ENCODE measurements at regions of chr5 and their contacts with region 1.

Region 1: DNA sequence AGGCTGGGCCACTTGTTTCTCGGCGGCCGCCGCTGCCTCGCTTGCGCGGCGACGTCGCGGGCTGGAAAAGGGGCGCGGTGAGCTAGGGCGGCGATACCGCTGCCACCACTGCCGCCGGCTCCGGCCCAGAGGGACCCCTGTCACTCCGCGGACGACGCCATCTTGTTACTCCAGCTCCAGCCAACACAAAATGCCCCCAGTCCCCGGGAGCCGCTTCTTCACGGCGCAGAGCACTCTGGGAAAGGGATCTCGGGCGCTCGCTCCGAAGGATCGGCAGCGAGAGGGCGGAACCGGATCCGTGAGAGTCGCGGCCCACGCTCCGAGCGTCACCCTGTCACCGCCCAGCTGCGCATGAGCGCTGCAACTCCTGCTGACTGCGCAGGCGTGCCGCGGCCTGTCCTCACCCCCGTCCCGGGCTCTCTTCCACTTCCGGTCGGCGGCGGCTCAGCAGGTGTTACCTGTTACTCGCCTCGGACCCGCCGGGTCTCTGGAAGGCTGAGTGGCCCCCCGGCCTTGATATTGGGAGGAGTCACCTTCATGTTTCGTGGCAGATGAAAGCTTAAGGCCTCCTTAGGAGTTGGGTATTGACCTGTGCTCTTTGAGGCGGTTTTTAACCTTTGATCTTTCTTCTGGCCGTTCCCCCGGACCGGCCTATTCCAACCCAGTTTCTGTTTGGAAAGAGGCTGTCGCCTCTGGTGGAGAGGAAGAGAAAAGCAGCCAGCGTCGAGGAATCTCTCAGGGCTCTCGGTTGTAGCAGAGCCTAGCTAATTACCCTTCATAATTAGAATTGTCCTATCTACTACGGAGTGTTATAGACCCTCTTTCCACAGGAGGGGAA is at the start of gene CSNK1A1:
- DNase-seq: peak; percentile 99
- H3K4me3 ChIP-seq: peak within 1 kb of the TSS; percentile 76
- H3K4me3 Mint-ChIP-seq: peak within 1 kb of the TSS; percentile 99
- H3K27ac Mint-ChIP-seq: peak within 1 kb of the TSS; percentile 99
- H3K4me1 ChIP-seq: peaks cover 30% of the 10 kb centered on the region
- H3K4me1 Mint-ChIP-seq: peaks cover 16% of the 10 kb centered on the region
- H3K27me3 ChIP-seq: no peaks in the 10 kb centered on the region
- H3K27me3 Mint-ChIP-seq: no peaks in the 10 kb centered on the region
- CTCF ChIP-seq: peak; percentile 80
- total RNA-seq, gene CSNK1A1: 252 and 264 TPM in 2 replicates

Region 2: DNA sequence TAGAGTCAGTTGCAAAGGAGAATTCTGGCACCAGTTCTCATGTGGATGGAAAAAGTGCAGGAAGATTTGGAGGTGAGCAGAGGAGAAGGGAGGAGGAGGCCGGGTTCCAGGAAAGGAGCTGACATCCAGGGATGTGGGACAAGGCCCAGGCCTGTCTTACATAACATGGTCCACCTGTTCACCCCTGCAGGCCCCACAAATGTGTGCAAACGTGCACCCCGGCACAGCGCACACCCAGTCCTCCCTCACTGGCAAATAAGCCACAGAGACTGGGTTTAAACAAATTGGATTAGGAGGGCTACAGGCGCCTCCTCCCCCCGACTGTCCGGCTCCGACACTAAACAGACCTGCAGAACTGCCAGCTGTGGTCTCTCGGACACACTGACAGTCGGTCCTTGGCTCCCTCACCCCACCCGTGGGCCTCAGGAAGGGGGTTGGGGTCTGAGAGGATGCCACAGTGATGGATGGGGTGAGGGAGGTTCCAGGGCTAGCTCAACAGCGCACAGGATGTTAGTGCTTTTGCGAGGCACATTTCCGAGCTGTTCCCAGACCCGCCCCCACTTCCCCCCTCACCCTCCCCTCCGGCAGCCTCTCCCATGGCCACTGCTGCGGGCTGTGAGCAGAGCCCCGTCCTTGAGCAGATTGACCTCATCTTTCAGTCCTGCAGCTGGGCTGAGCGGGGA is 128.9 kb before region 1 on chr5:
- CTCF ChIA-PET with region 1: no interaction called
- POLR2A ChIA-PET with region 1: no interaction called
- intact Hi-C with region 1: no loop called
- DNase-seq: no peak
- H3K4me3 ChIP-seq: no peak overlapping the region
- H3K4me3 Mint-ChIP-seq: no peak overlapping the region
- H3K27ac Mint-ChIP-seq: no peak overlapping the region
- H3K4me1 ChIP-seq: no peaks in the 10 kb centered on the region
- H3K4me1 Mint-ChIP-seq: no peaks in the 10 kb centered on the region
- H3K27me3 ChIP-seq: no peaks in the 10 kb centered on the region
- H3K27me3 Mint-ChIP-seq: no peaks in the 10 kb centered on the region
- CTCF ChIP-seq: no peak

Region 3: DNA sequence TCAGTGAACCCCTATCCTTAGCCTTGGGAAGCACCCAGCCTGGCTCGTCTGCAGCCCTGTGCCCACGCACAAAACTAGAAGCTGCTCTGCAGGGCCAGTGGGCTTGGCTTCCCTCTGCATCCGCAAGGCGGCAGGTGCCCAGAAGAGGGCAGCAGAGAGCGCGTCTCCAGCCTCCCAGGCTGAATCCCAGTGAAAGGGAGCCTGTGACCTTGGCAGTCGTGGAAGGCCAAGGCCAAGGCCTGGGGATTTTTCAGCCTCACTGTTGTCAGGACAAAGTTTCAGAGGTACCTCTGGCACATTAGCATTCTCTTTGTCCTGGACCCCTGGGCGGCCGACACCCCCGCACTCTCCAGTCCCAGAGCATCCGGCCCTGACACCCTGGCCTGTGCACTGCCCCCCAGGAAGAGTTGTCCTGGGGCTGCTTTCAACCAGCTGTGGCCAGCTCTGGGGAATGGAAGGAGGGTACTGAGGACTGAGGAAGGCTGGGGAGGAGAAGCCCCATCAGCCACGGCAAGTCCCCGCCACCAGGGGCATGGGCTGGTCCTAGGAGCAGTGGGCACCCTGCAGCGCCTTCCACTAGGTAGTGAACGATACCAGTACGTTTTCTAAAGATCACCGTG is 108.7 kb before region 1 on chr5:
- CTCF ChIA-PET with region 1: interaction called, 3 read pairs
- POLR2A ChIA-PET with region 1: interaction called, 5 read pairs
- intact Hi-C with region 1: loop called (anchors 1 kb)
- DNase-seq: peak; percentile 81 to 92
- H3K4me3 ChIP-seq: no peak overlapping the region
- H3K4me3 Mint-ChIP-seq: no peak overlapping the region
- H3K27ac Mint-ChIP-seq: peak overlapping the region; percentile 47
- H3K4me1 ChIP-seq: peaks cover 23% of the 10 kb centered on the region
- H3K4me1 Mint-ChIP-seq: peaks cover 30% of the 10 kb centered on the region
- H3K27me3 ChIP-seq: no peaks in the 10 kb centered on the region
- H3K27me3 Mint-ChIP-seq: no peaks in the 10 kb centered on the region
- CTCF ChIP-seq: peak; percentile 85 to 95

Region 4: GRCh38 chr5:149485655-149486425 is 65.6 kb before region 1 on chr5:
- CTCF ChIA-PET with region 1: interaction called, 3 read pairs
- POLR2A ChIA-PET with region 1: no interaction called
- intact Hi-C with region 1: loop called (anchors 2 kb)
- DNase-seq: peak; percentile 33 to 49
- H3K4me3 ChIP-seq: no peak overlapping the region
- H3K4me3 Mint-ChIP-seq: no peak overlapping the region
- H3K27ac Mint-ChIP-seq: peak overlapping the region; percentile 36
- H3K4me1 ChIP-seq: peaks cover 39% of the 10 kb centered on the region
- H3K4me1 Mint-ChIP-seq: peaks cover 44% of the 10 kb centered on the region
- H3K27me3 ChIP-seq: no peaks in the 10 kb centered on the region
- H3K27me3 Mint-ChIP-seq: no peaks in the 10 kb centered on the region
- CTCF ChIP-seq: no peak

Region 5: GRCh38 chr5:149561848-149562247 is 10.4 kb after region 1 on chr5:
- CTCF ChIA-PET with region 1: interaction called, 11 read pairs
- POLR2A ChIA-PET with region 1: interaction called, 5 read pairs
- intact Hi-C with region 1: no loop called
- DNase-seq: no peak
- H3K4me3 ChIP-seq: no peak overlapping the region
- H3K4me3 Mint-ChIP-seq: no peak overlapping the region
- H3K27ac Mint-ChIP-seq: peak overlapping the region; percentile 26
- H3K4me1 ChIP-seq: peaks cover 33% of the 10 kb centered on the region
- H3K4me1 Mint-ChIP-seq: peaks cover 18% of the 10 kb centered on the region
- H3K27me3 ChIP-seq: no peaks in the 10 kb centered on the region
- H3K27me3 Mint-ChIP-seq: no peaks in the 10 kb centered on the region
- CTCF ChIP-seq: no peak

Region 6: DNA sequence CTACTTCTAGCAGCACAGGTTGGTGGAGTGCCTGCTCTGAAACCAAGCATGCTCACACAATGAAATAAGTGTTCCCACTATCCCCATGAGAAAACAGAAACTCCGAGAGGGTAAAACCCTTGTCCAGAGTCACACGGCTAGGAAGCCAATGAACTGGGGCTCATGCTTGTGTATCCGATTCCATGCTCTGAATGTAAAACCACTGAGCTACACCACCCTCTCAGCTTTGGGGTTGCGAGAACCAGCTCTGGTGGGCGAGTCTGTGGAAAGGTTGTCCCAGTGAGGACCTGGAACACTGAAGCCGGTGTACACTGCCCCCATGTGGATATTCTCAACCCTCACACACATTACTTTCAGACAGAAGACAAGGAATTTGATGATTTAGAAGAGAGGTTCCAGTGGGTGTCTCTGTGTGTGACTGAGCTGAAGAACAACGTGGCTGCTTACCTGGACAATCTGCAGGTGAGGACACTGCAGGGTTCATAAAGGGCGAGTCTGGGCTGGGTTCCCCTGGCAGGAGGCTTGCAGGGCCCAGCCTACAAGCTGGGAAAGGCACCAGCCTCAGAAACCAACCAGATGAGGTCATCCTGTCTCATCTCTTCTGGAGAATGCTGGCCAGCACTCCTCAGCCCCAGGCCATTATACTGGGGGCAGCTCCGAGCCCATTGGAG is 67.3 kb after region 1 on chr5:
- CTCF ChIA-PET with region 1: interaction called, 9 read pairs
- POLR2A ChIA-PET with region 1: interaction called, 4 read pairs
- intact Hi-C with region 1: loop called (anchors 1 kb)
- DNase-seq: peak; percentile 76 to 79
- H3K4me3 ChIP-seq: no peak overlapping the region
- H3K4me3 Mint-ChIP-seq: no peak overlapping the region
- H3K27ac Mint-ChIP-seq: peak overlapping the region; percentile 69
- H3K4me1 ChIP-seq: peaks cover 8% of the 10 kb centered on the region
- H3K4me1 Mint-ChIP-seq: peaks cover 7% of the 10 kb centered on the region
- H3K27me3 ChIP-seq: no peaks in the 10 kb centered on the region
- H3K27me3 Mint-ChIP-seq: no peaks in the 10 kb centered on the region
- CTCF ChIP-seq: peak; percentile 69 to 71

Region 7: GRCh38 chr5:150412319-150413175 is 861.1 kb after region 1 on chr5 and contains the start of gene CD74:
- CTCF ChIA-PET with region 1: no interaction called
- POLR2A ChIA-PET with region 1: no interaction called
- intact Hi-C with region 1: no loop called
- DNase-seq: peak; percentile 73 to 86
- H3K4me3 ChIP-seq: peak within 1 kb of the TSS; percentile 9
- H3K4me3 Mint-ChIP-seq: peak within 1 kb of the TSS; percentile 72
- H3K27ac Mint-ChIP-seq: peak within 1 kb of the TSS; percentile 76
- H3K4me1 ChIP-seq: peaks cover 6% of the 10 kb centered on the region
- H3K4me1 Mint-ChIP-seq: peaks cover 7% of the 10 kb centered on the region
- H3K27me3 ChIP-seq: no peaks in the 10 kb centered on the region
- H3K27me3 Mint-ChIP-seq: no peaks in the 10 kb centered on the region
- CTCF ChIP-seq: no peak
- total RNA-seq, gene CD74: 49.6 and 59.3 TPM in 2 replicates